Pancreas (tissue), 10 donors: ENCODE measurements at regions of chr2 and their contacts with region 1.

Region 1: GRCh38 chr2:1886405-1886992 is 142.2 kb upstream of the PXDN start:
- DNase-seq: peak in 5 of 6 donors; percentile 56 to 88 (median 70)
- ATAC-seq: peak; percentile 82 to 93 (median 84)
- H3K4me3 ChIP-seq: no peak overlapping the region
- H3K27ac ChIP-seq: no peak overlapping the region
- H3K4me1 ChIP-seq: peaks cover 0 to 4% (median 0%) of the 10 kb centered on the region in 3 donors
- H3K27me3 ChIP-seq: peaks cover 0 to 3% (median 0%) of the 10 kb centered on the region in 4 donors
- CTCF ChIP-seq: peak; percentile 48 to 77 (median 60)

Region 2: GRCh38 chr2:2291500-2292260 is 405.2 kb after region 1 on chr2:
- intact Hi-C with region 1: loop called in 1 of 3 experiments (anchors 10 kb)
- DNase-seq: peak in 2 of 6 donors; percentile 21 to 33
- ATAC-seq: peak; percentile 81 to 92 (median 86)
- H3K4me3 ChIP-seq: no peak overlapping the region
- H3K27ac ChIP-seq: no peak overlapping the region
- H3K4me1 ChIP-seq: no peaks in the 10 kb centered on the region
- H3K27me3 ChIP-seq: no peaks in the 10 kb centered on the region
- CTCF ChIP-seq: peak in 2 of 4 donors; percentile 32 to 42